Cardiac septum (tissue), 1 donor: ENCODE measurements at regions of chr10 and their contacts with region 1.

Region 1: GRCh38 chr10:122504610-122504950 is 43.2 kb downstream of the HTRA1 start:
- DNase-seq: peak; percentile 91

Region 2: GRCh38 chr10:122461367-122461728 is 43.2 kb before region 1 on chr10 and contains the start of gene HTRA1:
- intact Hi-C with region 1: loop called (anchors 5 kb)
- DNase-seq: peak; percentile 88
- total RNA-seq, gene HTRA1: 104 TPM

Region 3: DNA sequence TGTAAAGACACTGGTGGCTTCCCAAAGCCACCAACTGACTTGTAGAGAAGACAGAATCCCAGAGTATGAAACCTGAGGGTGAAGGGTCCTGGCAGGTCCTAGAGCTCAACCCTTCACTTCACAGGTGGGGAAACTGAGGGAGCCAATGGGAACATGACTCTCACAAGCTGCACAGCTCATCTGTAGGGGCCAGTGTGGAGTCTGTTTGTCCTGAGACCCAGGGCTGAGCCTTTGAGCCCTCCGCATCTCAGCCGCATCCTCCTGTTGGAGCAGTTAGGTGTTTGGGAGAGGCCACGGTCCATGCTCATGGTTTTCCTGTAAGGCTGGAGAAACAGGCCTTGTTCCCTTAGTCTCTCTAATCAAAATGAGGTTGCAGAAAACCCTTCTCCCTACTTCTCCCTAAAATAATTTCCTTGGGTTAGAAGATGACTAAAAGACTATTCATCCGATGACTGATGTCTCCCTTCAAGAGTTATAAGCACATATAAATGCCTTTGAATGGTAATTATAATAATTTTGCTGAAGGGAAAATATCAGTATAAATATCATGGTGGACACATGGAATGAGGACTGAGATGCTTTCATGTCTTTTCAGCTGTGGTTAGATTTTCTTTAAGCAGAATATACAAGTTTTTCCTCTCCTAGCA is 32.9 kb before region 1 on chr10:
- intact Hi-C with region 1: no loop called
- DNase-seq: peak; percentile 38